ENCODE measurements at regions of chr1 and their contacts with region 1.

Region 1: GRCh38 chr1:56457756-56458375 is 121.5 kb downstream of the PLPP3 start:
- DNase-seq: no peak
- H3K4me3 ChIP-seq: no peak overlapping the region
- H3K27ac ChIP-seq: no peak overlapping the region
- H3K4me1 ChIP-seq: no peaks in the 10 kb centered on the region
- H3K27me3 ChIP-seq: no peaks in the 10 kb centered on the region
- CTCF ChIP-seq: no peak

Region 2: DNA sequence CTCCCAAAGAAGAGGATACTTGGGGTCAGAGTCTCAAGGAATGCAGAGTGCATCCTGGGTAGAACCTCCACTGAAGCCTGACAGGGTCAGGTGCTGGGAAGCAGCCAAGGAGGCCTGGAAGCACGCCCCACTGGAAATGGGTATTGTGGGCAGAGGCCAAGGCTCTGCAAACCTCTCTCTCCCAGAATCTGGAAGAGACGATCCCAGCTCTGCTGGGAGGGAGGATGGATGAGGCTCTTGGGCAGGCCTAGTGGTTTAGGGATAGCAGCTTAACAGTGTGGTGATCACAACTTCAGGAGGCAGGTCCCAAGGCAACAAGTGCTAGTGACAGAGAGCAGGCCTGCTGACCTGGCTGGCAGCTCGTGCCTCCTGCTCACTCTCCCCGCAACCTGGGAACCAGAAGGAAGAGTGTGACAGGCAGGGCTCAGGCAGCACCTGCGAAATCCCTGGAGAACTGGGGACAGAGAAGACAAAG is 519.5 kb before region 1 on chr1:
- CTCF ChIA-PET with region 1: no interaction called
- POLR2A ChIA-PET with region 1: no interaction called
- intact Hi-C with region 1: no loop called
- DNase-seq: no peak
- H3K4me3 ChIP-seq: no peak overlapping the region
- H3K27ac ChIP-seq: no peak overlapping the region
- H3K4me1 ChIP-seq: no peaks in the 10 kb centered on the region
- H3K27me3 ChIP-seq: no peaks in the 10 kb centered on the region
- CTCF ChIP-seq: no peak

Region 3: GRCh38 chr1:56477164-56478111 is 19.6 kb after region 1 on chr1:
- CTCF ChIA-PET with region 1: no interaction called
- POLR2A ChIA-PET with region 1: interaction called, 11 read pairs
- intact Hi-C with region 1: no loop called
- DNase-seq: no peak
- H3K4me3 ChIP-seq: no peak overlapping the region
- H3K27ac ChIP-seq: no peak overlapping the region
- H3K4me1 ChIP-seq: no peaks in the 10 kb centered on the region
- H3K27me3 ChIP-seq: peaks cover 56% of the 10 kb centered on the region
- CTCF ChIP-seq: no peak

Region 4: DNA sequence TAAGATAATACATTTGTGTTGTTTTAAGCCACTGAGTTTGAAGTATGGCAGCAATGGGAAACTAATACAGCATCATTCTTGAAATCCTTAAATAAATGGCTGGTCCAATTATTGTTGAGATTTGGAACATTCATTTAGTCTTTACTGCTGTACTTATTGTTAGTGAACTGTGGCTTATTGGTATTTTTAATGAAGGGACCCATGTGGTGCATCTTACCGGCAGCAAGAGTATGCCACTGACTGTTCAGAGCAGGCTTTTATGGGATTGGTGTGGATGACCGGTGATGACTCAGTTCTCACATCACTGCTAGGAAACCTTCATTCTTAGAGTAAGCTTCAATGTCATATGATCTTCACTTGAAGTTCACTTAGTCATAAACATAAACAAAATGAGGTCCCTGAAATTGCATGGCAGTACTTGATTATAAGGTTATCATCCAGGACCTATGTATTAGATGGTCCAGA is 218.7 kb after region 1 on chr1:
- CTCF ChIA-PET with region 1: no interaction called
- POLR2A ChIA-PET with region 1: no interaction called
- intact Hi-C with region 1: no loop called
- DNase-seq: no peak
- H3K4me3 ChIP-seq: no peak overlapping the region
- H3K27ac ChIP-seq: no peak overlapping the region
- H3K4me1 ChIP-seq: no peaks in the 10 kb centered on the region
- H3K27me3 ChIP-seq: peaks cover 9% of the 10 kb centered on the region
- CTCF ChIP-seq: no peak